Body of pancreas (tissue), 4 donors: ENCODE measurements at regions of chr5 and their contacts with region 1.

Region 1: GRCh38 chr5:154618696-154619095 is 136.5 kb upstream of the LARP1 start:
- DNase-seq: no peak
- ATAC-seq: no peak
- H3K4me3 ChIP-seq: no peak overlapping the region
- H3K27ac ChIP-seq: no peak overlapping the region
- H3K4me1 ChIP-seq: no peaks in the 10 kb centered on the region
- H3K27me3 ChIP-seq: no peaks in the 10 kb centered on the region
- CTCF ChIP-seq: no peak
- POLR2A ChIP-seq: no peak

Region 2: GRCh38 chr5:154449786-154450185 is 168.9 kb before region 1 on chr5:
- intact Hi-C with region 1: loop called (anchors 5 kb)
- DNase-seq: no peak
- ATAC-seq: no peak
- H3K4me3 ChIP-seq: no peak overlapping the region
- H3K27ac ChIP-seq: no peak overlapping the region
- H3K4me1 ChIP-seq: peaks cover 20% of the 10 kb centered on the region
- H3K27me3 ChIP-seq: no peaks in the 10 kb centered on the region
- CTCF ChIP-seq: no peak
- POLR2A ChIP-seq: no peak

Region 3: GRCh38 chr5:154575546-154576428 is 42.9 kb before region 1 on chr5:
- intact Hi-C with region 1: no loop called
- DNase-seq: peak in 1 of 4 donors; percentile 24
- ATAC-seq: no peak
- H3K4me3 ChIP-seq: no peak overlapping the region
- H3K27ac ChIP-seq: no peak overlapping the region
- H3K4me1 ChIP-seq: no peaks in the 10 kb centered on the region
- H3K27me3 ChIP-seq: no peaks in the 10 kb centered on the region
- CTCF ChIP-seq: peak in 3 of 7 experiments; percentile 19 to 25 (median 20)
- POLR2A ChIP-seq: no peak

Region 4: DNA sequence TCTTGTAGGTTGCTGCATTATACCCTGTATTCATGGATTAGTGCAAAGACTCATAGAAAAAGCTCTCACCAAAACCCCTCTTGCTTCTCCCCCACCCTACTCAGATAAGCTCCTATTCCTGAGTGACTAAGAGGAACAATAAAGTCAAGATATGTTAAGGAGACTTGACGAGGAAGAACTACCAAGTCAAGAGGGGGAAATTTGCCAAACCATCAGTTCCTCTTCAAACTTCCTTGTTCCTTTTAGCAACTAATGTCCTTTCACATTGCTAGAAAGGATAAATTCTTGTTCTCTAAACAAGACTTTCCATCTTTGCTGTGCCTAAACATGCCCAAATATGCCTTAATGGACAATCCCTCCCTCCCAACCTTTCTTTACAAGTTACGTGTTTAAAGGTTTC is 266.7 kb after region 1 on chr5:
- intact Hi-C with region 1: no loop called
- DNase-seq: no peak
- ATAC-seq: no peak
- H3K4me3 ChIP-seq: no peak overlapping the region
- H3K27ac ChIP-seq: no peak overlapping the region
- H3K4me1 ChIP-seq: no peaks in the 10 kb centered on the region
- H3K27me3 ChIP-seq: no peaks in the 10 kb centered on the region
- CTCF ChIP-seq: no peak
- POLR2A ChIP-seq: no peak